OCI-LY7 (cell line): ENCODE measurements at regions of chr11 and their contacts with region 1.

Region 1: GRCh38 chr11:47791774-47792430 is 24.8 kb upstream of the FNBP4 start:
- DNase-seq: no peak
- H3K4me3 ChIP-seq: no peak overlapping the region
- H3K27ac ChIP-seq: no peak overlapping the region
- H3K4me1 ChIP-seq: no peaks in the 10 kb centered on the region
- CTCF ChIP-seq: no peak

Region 2: DNA sequence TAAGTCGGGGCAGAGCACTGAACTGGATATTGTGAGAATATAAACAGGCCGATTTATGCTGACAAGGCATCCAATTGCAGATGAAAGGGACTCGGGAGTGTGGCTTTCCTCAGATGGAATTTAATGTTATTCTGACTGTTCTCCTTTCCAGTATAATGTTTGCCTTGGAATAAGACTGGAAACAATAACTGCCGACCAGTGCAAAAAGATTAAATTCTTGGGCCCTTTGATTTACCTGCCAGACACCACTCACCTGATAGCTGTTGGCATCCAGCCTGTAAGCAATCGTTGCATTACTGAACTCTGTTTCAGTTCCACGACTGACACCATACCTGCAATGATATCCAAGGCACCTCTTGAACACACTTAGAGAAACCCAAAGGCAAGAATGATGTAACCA is 45.4 kb after region 1 on chr11:
- CTCF ChIA-PET with region 1: no interaction called
- POLR2A ChIA-PET with region 1: interaction called, 3 read pairs
- intact Hi-C with region 1: loop called (anchors 5 kb)
- DNase-seq: no peak
- H3K4me3 ChIP-seq: no peak overlapping the region
- H3K27ac ChIP-seq: no peak overlapping the region
- H3K4me1 ChIP-seq: no peaks in the 10 kb centered on the region
- CTCF ChIP-seq: no peak